Naive thymus-derived CD4-positive, alpha-beta T cell (primary cell): ENCODE measurements at regions of chr15 and their contacts with region 1.

Region 1: DNA sequence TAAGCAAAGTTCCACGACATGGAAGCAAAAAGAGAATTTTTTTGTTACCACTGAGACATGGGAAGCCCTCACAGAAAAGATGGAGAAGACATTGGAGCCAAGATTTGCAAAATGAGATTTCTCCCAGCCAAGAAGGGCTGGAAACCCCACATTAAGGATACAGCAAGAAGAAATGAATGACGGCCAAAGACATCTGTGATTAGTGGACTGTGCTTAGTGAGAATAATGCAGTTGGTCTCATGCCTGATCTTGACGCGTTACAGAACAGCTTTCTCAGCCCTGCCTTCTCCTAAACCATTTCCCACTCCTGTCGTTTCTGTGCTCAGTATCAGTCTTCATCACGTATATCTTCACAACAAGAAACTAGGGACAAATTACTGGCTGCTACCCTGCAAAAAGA is 45.8 kb upstream of the ARRDC4 start:
- DNase-seq: no peak
- ATAC-seq: no peak
- H3K4me3 ChIP-seq: no peak overlapping the region
- H3K4me3 Mint-ChIP-seq: no peak overlapping the region
- H3K27ac ChIP-seq: no peak overlapping the region
- H3K27ac Mint-ChIP-seq: no peak overlapping the region
- H3K4me1 ChIP-seq: no peaks in the 10 kb centered on the region
- H3K4me1 Mint-ChIP-seq: no peaks in the 10 kb centered on the region
- H3K27me3 ChIP-seq: peaks cover 0 to 3% of the 10 kb centered on the region in 2 donors
- H3K27me3 Mint-ChIP-seq: peaks cover 0 to 28% (median 20%) of the 10 kb centered on the region in 5 donors

Region 2: DNA sequence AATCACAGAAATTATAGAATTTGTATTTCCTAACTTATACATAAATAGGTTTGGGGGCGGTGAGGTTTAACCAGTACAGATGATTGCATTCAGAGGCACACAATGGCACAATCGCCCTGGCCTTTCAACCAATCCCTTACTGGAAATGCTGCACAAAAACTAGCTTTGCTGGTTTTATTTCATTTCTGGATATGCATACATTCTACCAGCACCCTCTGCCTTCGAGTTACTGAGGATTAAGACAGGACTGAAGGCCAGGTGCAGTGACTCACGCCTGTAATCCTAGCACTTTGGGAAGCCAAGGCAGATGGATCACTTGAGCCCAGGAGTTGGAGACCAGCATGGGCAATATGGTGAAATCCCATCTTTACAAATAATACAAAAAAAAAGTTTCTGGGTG is 381.9 kb after region 1 on chr15:
- CTCF ChIA-PET with region 1: no interaction called
- POLR2A ChIA-PET with region 1: no interaction called
- intact Hi-C with region 1: loop called in 1 of 2 experiments (anchors 5 kb)
- DNase-seq: no peak
- ATAC-seq: no peak
- H3K4me3 ChIP-seq: no peak overlapping the region
- H3K4me3 Mint-ChIP-seq: no peak overlapping the region
- H3K27ac ChIP-seq: no peak overlapping the region
- H3K27ac Mint-ChIP-seq: no peak overlapping the region
- H3K4me1 ChIP-seq: no peaks in the 10 kb centered on the region
- H3K4me1 Mint-ChIP-seq: peaks cover 0 to 5% (median 3%) of the 10 kb centered on the region in 7 donors
- H3K27me3 ChIP-seq: no peaks in the 10 kb centered on the region
- H3K27me3 Mint-ChIP-seq: peaks cover 25 to 51% (median 29%) of the 10 kb centered on the region in 5 donors